ENCODE measurements at regions of chr9 and their contacts with region 1.

Region 1: DNA sequence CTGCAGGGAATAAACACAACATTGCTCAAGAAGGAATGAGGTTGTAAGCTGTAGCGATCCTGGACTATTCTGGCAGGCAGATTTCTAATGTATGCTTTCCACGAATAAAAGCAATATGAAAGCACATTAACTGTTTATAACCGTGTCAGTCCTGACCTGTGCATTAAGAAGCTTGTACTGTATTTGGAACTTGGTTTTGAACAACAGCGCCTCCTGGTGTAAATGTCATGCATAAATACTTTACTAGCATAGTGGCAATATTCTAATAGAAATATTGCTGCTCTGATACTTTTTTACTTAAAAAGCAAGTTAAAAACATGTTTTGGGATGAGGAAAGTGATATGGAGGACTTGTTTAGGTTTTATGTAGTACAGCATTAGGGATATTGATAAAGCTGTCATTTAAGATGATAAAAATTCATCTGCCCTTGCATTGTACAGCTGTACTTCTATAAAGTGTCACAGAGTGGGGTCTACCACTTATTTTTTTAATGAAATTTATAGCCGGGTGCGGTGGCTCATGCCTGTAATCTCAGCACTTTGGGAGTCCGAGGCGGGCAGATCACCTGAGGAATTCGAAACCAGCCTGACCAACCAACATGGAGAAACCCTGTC is 70.7 kb upstream of the GNE start:
- DNase-seq: peak; percentile 64
- H3K4me3 ChIP-seq: no peak overlapping the region
- H3K27ac ChIP-seq: no peak overlapping the region
- H3K27me3 ChIP-seq: no peaks in the 10 kb centered on the region
- CTCF ChIP-seq: peak; percentile 75

Region 2: DNA sequence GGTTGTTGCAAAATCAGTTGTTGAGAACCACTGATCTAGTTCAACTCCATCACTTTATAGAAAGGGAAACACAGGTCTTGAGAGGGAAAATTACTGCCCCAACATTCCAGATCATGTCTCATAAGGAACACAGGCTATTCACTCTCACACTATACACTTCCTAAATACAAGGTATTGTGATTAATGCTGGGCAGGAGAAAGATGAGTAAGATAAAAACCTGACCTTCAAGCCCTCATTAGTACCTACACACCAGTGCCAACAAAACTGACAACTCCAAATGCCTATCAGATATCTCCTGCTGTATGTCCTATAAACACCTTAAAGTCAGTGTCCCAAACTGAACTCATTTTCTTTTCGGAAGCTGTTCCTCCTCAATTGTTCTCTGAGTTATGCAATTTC is 78.8 kb before region 1 on chr9:
- CTCF ChIA-PET with region 1: interaction called, 64 read pairs
- POLR2A ChIA-PET with region 1: no interaction called
- DNase-seq: no peak
- H3K4me3 ChIP-seq: no peak overlapping the region
- H3K27ac ChIP-seq: no peak overlapping the region
- H3K27me3 ChIP-seq: no peaks in the 10 kb centered on the region
- CTCF ChIP-seq: no peak

Region 3: DNA sequence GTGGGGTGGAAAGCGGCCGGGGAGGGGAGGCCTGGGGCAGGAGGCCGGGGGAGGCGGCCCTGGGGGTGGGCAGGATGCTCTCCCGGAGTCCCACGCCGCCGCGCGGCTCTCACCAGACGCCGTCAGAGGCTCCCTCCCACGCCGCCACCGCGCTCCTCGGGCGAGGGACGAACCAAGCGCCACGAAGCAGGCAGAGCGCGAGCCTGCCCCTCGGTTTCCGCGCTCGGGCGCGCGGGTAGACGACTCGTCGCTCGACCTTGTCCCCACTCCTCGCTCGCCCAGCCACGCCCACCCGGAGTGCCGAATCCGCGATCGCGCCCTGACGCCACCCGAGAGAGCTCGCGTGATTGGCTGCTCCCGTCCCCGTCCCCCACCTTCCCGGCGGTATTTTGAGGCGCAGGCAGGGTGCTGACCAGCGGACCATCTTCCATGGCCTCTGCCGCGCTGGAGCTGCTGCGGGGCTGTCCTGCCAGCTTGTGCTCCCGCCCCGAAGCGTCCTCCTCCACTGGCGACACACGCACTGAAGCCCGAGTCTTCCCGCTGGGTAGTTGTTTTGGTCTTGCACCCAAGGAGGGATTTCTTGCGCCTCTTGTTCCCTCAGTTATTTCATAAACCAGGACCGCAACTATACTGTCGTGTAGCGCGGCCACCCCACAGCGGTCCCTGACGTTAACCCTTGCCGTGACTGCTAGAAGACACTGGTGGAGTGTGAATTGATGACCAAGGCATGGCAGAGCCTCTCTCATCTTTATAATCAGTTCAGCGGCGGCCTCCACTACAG is 70.5 kb before region 1 on chr9 and contains the start of gene GNE:
- CTCF ChIA-PET with region 1: interaction called, 22 read pairs
- POLR2A ChIA-PET with region 1: interaction called, 12 read pairs
- DNase-seq: peak; percentile 85
- H3K4me3 ChIP-seq: peak within 1 kb of the TSS; percentile 82
- H3K27ac ChIP-seq: peak within 1 kb of the TSS; percentile 88
- H3K27me3 ChIP-seq: no peaks in the 10 kb centered on the region
- CTCF ChIP-seq: no peak
- polyA plus RNA-seq, gene GNE: 16.4 and 17.4 TPM in 2 replicates

Region 4: GRCh38 chr9:36306471-36307306 is 22.2 kb before region 1 on chr9:
- CTCF ChIA-PET with region 1: no interaction called
- POLR2A ChIA-PET with region 1: no interaction called
- DNase-seq: no peak
- H3K4me3 ChIP-seq: no peak overlapping the region
- H3K27ac ChIP-seq: no peak overlapping the region
- H3K27me3 ChIP-seq: no peaks in the 10 kb centered on the region
- CTCF ChIP-seq: no peak